Gastrocnemius medialis (tissue), 4 donors: ENCODE measurements at regions of chr21 and their contacts with region 1.

Region 1: DNA sequence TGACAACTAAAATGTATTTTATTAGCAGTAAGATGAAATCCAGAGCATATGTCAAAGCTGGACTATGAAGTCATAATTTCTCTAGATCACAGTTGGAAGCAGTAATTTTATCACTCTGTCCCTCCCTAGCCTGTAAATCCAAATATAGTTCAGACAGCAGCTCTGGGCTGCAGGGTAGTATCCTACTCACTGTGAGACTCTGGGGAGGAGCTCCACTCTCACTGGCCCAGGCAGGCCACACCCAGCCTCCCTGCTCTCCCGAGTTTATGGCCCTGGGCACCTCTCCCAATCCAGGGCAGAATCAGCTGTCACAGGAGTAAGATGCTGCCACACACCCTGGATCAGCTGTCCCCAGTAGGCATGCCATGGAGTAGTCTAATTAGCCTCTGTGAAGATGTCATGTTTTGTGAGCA is 131.1 kb downstream of the HLCS start:
- DNase-seq: peak; percentile 92 to 96
- ATAC-seq: peak; percentile 96 to 97
- H3K4me3 ChIP-seq: no peak overlapping the region
- H3K27ac ChIP-seq: peak overlapping the region; percentile 78 to 84 (median 80)
- H3K4me1 ChIP-seq: peaks cover 24 to 33% of the 10 kb centered on the region in 2 donors
- H3K27me3 ChIP-seq: no peaks in the 10 kb centered on the region
- CTCF ChIP-seq: no peak
- POLR2A ChIP-seq: peak; percentile 17 to 29

Region 2: DNA sequence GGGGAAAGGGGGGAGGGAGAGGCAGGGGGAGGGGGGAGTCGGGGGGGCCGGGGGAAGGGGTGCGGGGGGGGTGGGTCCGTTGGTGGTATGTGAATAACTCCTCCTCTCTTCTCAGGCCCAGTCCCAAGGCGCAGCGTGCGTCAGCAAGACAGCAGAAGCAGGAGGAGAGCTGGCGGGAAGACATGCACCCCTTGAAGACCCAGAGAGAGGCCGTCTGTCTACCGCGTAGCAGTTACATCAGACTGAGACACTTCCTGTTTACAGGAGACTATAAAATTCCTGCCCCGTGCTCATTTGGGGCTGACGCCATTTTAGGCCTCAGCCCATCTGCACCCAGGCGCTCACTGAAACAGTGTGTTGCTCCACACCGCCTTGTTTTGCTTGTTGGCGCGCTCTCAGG is 830.4 kb before region 1 on chr21:
- in situ Hi-C with region 1: no loop called
- intact Hi-C with region 1: no loop called
- DNase-seq: peak in 1 of 2 donors; percentile 41
- ATAC-seq: no peak
- H3K4me3 ChIP-seq: no peak overlapping the region
- H3K27ac ChIP-seq: no peak overlapping the region
- H3K4me1 ChIP-seq: no peaks in the 10 kb centered on the region
- H3K27me3 ChIP-seq: no peaks in the 10 kb centered on the region
- CTCF ChIP-seq: no peak
- POLR2A ChIP-seq: no peak

Region 3: GRCh38 chr21:36776981-36777617 is 58.3 kb before region 1 on chr21:
- in situ Hi-C with region 1: no loop called
- intact Hi-C with region 1: loop called (anchors 5 kb)
- DNase-seq: no peak
- ATAC-seq: no peak
- H3K4me3 ChIP-seq: no peak overlapping the region
- H3K27ac ChIP-seq: no peak overlapping the region
- H3K4me1 ChIP-seq: peaks cover 4 to 7% of the 10 kb centered on the region in 2 donors
- H3K27me3 ChIP-seq: no peaks in the 10 kb centered on the region
- CTCF ChIP-seq: no peak
- POLR2A ChIP-seq: no peak

Region 4: DNA sequence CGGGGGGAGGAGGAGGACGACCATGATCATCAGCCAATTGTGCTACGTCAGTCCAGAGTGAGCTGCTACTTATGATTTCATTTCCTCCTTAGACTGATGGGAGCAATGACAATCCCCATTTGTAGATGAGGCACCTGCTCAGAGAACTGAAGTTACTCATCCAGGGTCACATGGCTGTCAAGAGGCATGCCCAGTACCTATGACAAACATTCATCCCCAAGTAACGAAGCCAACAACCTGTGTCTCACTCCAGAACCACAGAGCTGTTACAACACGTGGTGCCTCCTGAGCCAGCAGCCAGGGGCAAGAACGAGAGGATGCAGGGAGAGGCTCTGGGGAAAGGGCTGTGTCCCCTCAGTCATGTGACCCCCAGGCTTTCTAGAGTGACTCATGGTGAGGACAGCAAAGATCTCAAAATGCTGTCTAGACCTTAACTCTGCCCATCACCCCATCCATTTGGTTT is 42.9 kb before region 1 on chr21:
- in situ Hi-C with region 1: no loop called
- intact Hi-C with region 1: loop called (anchors 2 kb)
- DNase-seq: peak; percentile 69 to 71
- ATAC-seq: peak; percentile 99
- H3K4me3 ChIP-seq: peak overlapping the region in 1 of 4 donors; percentile 18
- H3K27ac ChIP-seq: peak overlapping the region in 3 of 4 donors; percentile 18 to 65 (median 63)
- H3K4me1 ChIP-seq: peaks cover 5 to 6% of the 10 kb centered on the region in 2 donors
- H3K27me3 ChIP-seq: no peaks in the 10 kb centered on the region
- CTCF ChIP-seq: no peak
- POLR2A ChIP-seq: no peak

Region 5: DNA sequence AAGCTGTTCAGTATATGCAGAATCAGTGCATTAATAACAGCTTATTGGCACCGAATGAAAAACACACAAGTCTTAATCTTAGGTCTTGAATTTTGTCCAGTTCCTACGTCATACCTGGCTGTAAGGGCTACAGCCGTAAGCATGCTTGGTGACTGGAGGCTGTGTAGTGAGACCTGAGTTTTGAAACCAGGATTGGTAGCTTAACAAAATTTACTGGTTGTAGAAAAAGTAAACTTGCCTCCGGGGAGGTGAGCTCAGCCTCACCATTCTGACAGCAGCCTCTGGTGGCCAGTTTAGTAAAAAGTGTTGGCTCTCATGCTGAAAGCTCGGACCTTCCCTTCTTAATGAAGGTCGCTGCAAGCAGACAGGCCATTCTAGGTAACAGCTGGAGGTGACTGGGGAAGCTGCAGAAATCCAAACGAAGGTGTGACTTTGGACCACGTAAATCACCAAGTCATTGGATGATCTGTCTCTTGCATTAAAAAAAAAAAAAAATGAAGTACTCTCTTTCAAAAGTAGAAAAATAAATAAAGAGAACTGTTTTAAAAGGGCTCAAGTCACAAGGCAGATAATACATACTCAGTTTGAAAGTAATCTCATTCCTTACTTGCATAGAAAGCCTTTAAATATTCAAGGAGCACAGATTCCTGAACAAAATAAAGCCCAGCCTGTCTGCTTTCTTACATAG is 82.2 kb after region 1 on chr21:
- in situ Hi-C with region 1: no loop called
- intact Hi-C with region 1: no loop called
- DNase-seq: no peak
- ATAC-seq: peak; percentile 30 to 47
- H3K4me3 ChIP-seq: no peak overlapping the region
- H3K27ac ChIP-seq: peak overlapping the region in 3 of 4 donors; percentile 13 to 72 (median 39)
- H3K4me1 ChIP-seq: peaks cover 34 to 39% of the 10 kb centered on the region in 2 donors
- H3K27me3 ChIP-seq: no peaks in the 10 kb centered on the region
- CTCF ChIP-seq: peak in 2 of 5 experiments; percentile 34 to 39
- POLR2A ChIP-seq: no peak

Region 6: GRCh38 chr21:36994501-36995158 is 159.2 kb after region 1 on chr21:
- in situ Hi-C with region 1: no loop called
- intact Hi-C with region 1: no loop called
- DNase-seq: no peak
- ATAC-seq: no peak
- H3K4me3 ChIP-seq: no peak overlapping the region
- H3K27ac ChIP-seq: no peak overlapping the region
- H3K4me1 ChIP-seq: peaks cover 0 to 4% of the 10 kb centered on the region in 2 donors
- H3K27me3 ChIP-seq: peaks cover 0 to 5% (median 0%) of the 10 kb centered on the region in 3 donors
- CTCF ChIP-seq: no peak
- POLR2A ChIP-seq: no peak